Gastrocnemius medialis (tissue), 4 donors: ENCODE measurements at regions of chr2 and their contacts with region 1.

Region 1: GRCh38 chr2:19073522-19073921 is 284.9 kb downstream of the OSR1 start:
- DNase-seq: peak; percentile 79 to 92
- ATAC-seq: peak; percentile 96 to 97
- H3K4me3 ChIP-seq: no peak overlapping the region
- H3K27ac ChIP-seq: peak overlapping the region; percentile 62 to 81 (median 72)
- H3K4me1 ChIP-seq: peaks cover 11 to 12% of the 10 kb centered on the region in 2 donors
- H3K27me3 ChIP-seq: no peaks in the 10 kb centered on the region
- CTCF ChIP-seq: no peak
- POLR2A ChIP-seq: no peak

Region 2: GRCh38 chr2:17892770-17893534 is 1180.6 kb before region 1 on chr2:
- in situ Hi-C with region 1: no loop called
- intact Hi-C with region 1: loop called (anchors 10 kb)
- DNase-seq: no peak
- ATAC-seq: peak; percentile 27 to 43
- H3K4me3 ChIP-seq: no peak overlapping the region
- H3K27ac ChIP-seq: peak overlapping the region; percentile 57 to 78 (median 70)
- H3K4me1 ChIP-seq: peaks cover 31 to 32% of the 10 kb centered on the region in 2 donors
- H3K27me3 ChIP-seq: no peaks in the 10 kb centered on the region
- CTCF ChIP-seq: no peak
- POLR2A ChIP-seq: no peak

Region 3: GRCh38 chr2:19033240-19033639 is 40.3 kb before region 1 on chr2:
- in situ Hi-C with region 1: no loop called
- intact Hi-C with region 1: loop called (anchors 2 kb)
- DNase-seq: peak; percentile 63 to 85
- ATAC-seq: peak; percentile 99 to 100
- H3K4me3 ChIP-seq: no peak overlapping the region
- H3K27ac ChIP-seq: peak overlapping the region; percentile 70 to 86 (median 75)
- H3K4me1 ChIP-seq: peaks cover 12% of the 10 kb centered on the region in 2 donors
- H3K27me3 ChIP-seq: no peaks in the 10 kb centered on the region
- CTCF ChIP-seq: no peak
- POLR2A ChIP-seq: no peak

Region 4: GRCh38 chr2:19046986-19047780 is 26.3 kb before region 1 on chr2:
- in situ Hi-C with region 1: no loop called
- intact Hi-C with region 1: loop called (anchors 2 kb)
- DNase-seq: peak; percentile 70 to 72
- ATAC-seq: peak; percentile 99 to 100
- H3K4me3 ChIP-seq: no peak overlapping the region
- H3K27ac ChIP-seq: peak overlapping the region; percentile 71 to 76 (median 72)
- H3K4me1 ChIP-seq: peaks cover 31 to 35% of the 10 kb centered on the region in 2 donors
- H3K27me3 ChIP-seq: no peaks in the 10 kb centered on the region
- CTCF ChIP-seq: no peak
- POLR2A ChIP-seq: no peak